ENCODE measurements at regions of chr2 and their contacts with region 1.

Region 1: DNA sequence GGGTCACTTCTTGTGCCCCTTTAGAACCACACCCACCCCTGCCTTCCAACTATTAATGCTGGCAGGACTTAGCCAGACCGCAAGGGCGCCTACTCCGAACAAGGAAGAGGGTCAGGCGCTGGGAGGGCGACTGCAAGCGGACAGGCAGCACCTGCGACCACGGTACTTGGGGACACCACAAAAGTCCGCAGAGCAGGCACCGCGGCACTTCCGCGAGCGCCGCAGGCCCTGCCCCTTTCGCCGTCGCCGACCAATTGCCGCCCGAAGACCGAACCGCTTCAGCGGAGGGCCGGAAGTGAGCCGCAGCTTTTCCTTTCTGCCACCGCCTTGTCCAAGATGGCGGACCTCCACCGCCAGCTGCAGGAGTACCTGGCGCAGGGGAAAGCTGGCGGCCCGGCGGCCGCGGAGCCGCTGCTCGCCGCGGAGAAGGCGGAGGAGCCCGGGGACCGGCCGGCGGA is at the start of gene SFT2D3:
- DNase-seq: peak; percentile 85
- ATAC-seq: peak; percentile 74
- H3K4me3 Mint-ChIP-seq: peak within 1 kb of the TSS; percentile 93
- H3K27ac Mint-ChIP-seq: peak within 1 kb of the TSS; percentile 99
- H3K4me1 Mint-ChIP-seq: peaks cover 40% of the 10 kb centered on the region
- H3K27me3 Mint-ChIP-seq: no peaks in the 10 kb centered on the region
- CTCF ChIP-seq: no peak
- total RNA-seq, gene SFT2D3: 9.6 and 10.1 TPM in 2 replicates

Region 2: GRCh38 chr2:127081826-127082633 is 619.2 kb before region 1 on chr2:
- CTCF ChIA-PET with region 1: no interaction called
- POLR2A ChIA-PET with region 1: no interaction called
- intact Hi-C with region 1: loop called (anchors 2 kb)
- DNase-seq: peak; percentile 59
- ATAC-seq: peak; percentile 66
- H3K4me3 Mint-ChIP-seq: peak overlapping the region; percentile 84
- H3K27ac Mint-ChIP-seq: peak overlapping the region; percentile 95
- H3K4me1 Mint-ChIP-seq: peaks cover 92% of the 10 kb centered on the region
- H3K27me3 Mint-ChIP-seq: no peaks in the 10 kb centered on the region
- CTCF ChIP-seq: no peak

Region 3: DNA sequence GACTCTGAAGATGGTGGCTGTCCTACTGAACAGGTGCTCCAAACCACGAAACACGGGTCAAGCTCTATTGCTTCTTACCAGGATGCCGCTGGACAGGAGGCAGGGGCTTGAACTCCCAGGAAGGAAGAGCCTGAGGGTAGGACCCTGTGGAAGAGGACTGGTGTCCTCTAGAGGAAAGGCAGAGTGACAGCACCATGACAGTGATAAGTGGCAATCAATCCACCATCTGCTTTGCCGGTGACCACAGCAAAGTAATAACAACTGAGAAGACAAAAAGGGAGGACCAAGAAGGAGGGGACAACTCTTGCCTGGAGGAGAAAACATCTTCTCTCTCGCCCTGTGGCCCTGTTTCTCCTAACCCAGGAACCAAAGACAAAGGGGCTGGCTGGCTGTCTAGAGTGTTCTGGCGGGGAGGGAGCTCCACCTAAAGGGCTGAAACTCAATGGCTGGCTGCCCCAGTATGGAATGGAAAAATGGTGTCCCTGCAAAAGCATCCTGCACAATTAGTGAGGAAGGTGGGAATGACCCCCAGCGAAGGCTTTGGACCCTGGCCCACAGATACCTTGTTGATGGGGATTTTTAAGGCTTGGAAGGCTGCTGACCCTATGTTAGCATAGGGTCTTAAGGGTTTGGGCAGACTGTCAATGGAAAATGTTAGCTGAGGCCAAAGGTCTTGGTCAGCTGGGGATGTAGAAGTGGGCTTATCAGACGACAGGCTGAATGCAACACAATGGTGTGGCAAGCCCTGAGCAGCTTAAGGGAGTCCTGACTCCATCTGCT is 247.6 kb before region 1 on chr2:
- CTCF ChIA-PET with region 1: no interaction called
- POLR2A ChIA-PET with region 1: no interaction called
- intact Hi-C with region 1: no loop called
- DNase-seq: no peak
- ATAC-seq: no peak
- H3K4me3 Mint-ChIP-seq: no peak overlapping the region
- H3K27ac Mint-ChIP-seq: no peak overlapping the region
- H3K4me1 Mint-ChIP-seq: peaks cover 8% of the 10 kb centered on the region
- H3K27me3 Mint-ChIP-seq: no peaks in the 10 kb centered on the region
- CTCF ChIP-seq: no peak

Region 4: GRCh38 chr2:127576433-127577207 is 124.6 kb before region 1 on chr2:
- CTCF ChIA-PET with region 1: no interaction called
- POLR2A ChIA-PET with region 1: interaction called, 3 read pairs
- intact Hi-C with region 1: loop called (anchors 5 kb)
- DNase-seq: no peak
- ATAC-seq: no peak
- H3K4me3 Mint-ChIP-seq: peak overlapping the region; percentile 50
- H3K27ac Mint-ChIP-seq: no peak overlapping the region
- H3K4me1 Mint-ChIP-seq: peaks cover 64% of the 10 kb centered on the region
- H3K27me3 Mint-ChIP-seq: no peaks in the 10 kb centered on the region
- CTCF ChIP-seq: no peak

Region 5: GRCh38 chr2:127637725-127638252 is 63.4 kb before region 1 on chr2:
- CTCF ChIA-PET with region 1: no interaction called
- POLR2A ChIA-PET with region 1: interaction called, 24 read pairs
- intact Hi-C with region 1: no loop called
- DNase-seq: no peak
- ATAC-seq: no peak
- H3K4me3 Mint-ChIP-seq: peak overlapping the region; percentile 28
- H3K27ac Mint-ChIP-seq: peak overlapping the region; percentile 93
- H3K4me1 Mint-ChIP-seq: peaks cover 92% of the 10 kb centered on the region
- H3K27me3 Mint-ChIP-seq: no peaks in the 10 kb centered on the region
- CTCF ChIP-seq: no peak

Region 6: DNA sequence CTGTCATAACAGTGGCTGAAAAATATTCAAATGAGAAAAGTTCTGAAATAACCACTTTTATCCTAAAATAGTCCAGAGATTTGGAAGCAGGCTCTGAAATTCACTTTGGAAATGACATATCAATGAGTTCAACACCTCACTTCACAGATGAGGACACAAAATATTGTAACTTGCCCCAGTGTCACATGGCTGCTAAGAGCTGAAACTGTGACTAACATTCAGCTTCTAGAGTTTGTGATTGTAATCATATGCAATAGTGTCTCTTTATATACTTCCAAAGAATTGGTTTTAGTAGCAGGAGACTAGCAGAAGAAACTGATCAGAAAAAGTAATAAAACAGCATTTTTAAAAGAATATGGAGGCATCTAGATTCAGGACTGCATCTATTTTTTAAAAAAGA is 52.2 kb after region 1 on chr2:
- CTCF ChIA-PET with region 1: no interaction called
- POLR2A ChIA-PET with region 1: interaction called, 12 read pairs
- intact Hi-C with region 1: loop called (anchors 1 kb)
- DNase-seq: no peak
- ATAC-seq: no peak
- H3K4me3 Mint-ChIP-seq: no peak overlapping the region
- H3K27ac Mint-ChIP-seq: no peak overlapping the region
- H3K4me1 Mint-ChIP-seq: peaks cover 21% of the 10 kb centered on the region
- H3K27me3 Mint-ChIP-seq: no peaks in the 10 kb centered on the region
- CTCF ChIP-seq: no peak

Region 7: DNA sequence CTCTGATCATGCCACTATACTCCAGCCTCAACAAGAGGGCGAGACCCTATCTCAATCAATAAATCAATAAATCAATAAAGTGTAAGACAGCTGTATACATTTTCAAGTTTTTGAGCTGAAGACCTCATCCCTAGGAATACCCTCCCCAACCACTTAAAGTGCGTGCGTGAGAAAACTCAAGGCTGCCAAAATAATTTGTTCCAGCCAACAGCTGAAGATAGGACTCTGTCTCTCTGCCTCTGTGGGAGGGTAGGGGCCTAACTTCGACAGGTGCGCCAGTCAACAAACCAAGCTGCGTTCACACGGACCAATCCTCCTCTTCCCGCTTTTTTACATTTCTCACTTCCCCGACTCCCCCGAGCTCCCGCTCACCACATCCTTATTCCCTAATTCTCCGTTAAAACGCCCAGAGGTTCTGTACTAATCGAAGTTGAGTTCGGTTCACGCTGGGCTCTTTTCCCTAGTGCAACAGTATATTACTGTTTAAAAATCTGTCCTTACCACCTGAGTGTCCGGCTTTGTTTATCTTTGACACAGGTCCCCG is 156.1 kb after region 1 on chr2:
- CTCF ChIA-PET with region 1: no interaction called
- POLR2A ChIA-PET with region 1: interaction called, 12 read pairs
- intact Hi-C with region 1: loop called (anchors 1 kb)
- DNase-seq: no peak
- ATAC-seq: no peak
- H3K4me3 Mint-ChIP-seq: peak overlapping the region; percentile 88
- H3K27ac Mint-ChIP-seq: peak overlapping the region; percentile 64
- H3K4me1 Mint-ChIP-seq: peaks cover 42% of the 10 kb centered on the region
- H3K27me3 Mint-ChIP-seq: no peaks in the 10 kb centered on the region
- CTCF ChIP-seq: no peak